HCT116 (cell line): ENCODE measurements at regions of chr14 and their contacts with region 1.

Region 1: GRCh38 chr14:55160989-55161388 is 30.4 kb downstream of the DLGAP5 start:
- DNase-seq: peak; percentile 6
- ATAC-seq: peak; percentile 73
- H3K4me3 ChIP-seq: no peak overlapping the region
- H3K27ac ChIP-seq: no peak overlapping the region
- H3K4me1 ChIP-seq: no peaks in the 10 kb centered on the region
- H3K27me3 ChIP-seq: no peaks in the 10 kb centered on the region
- CTCF ChIP-seq: peak; percentile 27 to 72 (median 62)
- POLR2A ChIP-seq: no peak
- RAD21 ChIP-seq: peak; percentile 79

Region 2: DNA sequence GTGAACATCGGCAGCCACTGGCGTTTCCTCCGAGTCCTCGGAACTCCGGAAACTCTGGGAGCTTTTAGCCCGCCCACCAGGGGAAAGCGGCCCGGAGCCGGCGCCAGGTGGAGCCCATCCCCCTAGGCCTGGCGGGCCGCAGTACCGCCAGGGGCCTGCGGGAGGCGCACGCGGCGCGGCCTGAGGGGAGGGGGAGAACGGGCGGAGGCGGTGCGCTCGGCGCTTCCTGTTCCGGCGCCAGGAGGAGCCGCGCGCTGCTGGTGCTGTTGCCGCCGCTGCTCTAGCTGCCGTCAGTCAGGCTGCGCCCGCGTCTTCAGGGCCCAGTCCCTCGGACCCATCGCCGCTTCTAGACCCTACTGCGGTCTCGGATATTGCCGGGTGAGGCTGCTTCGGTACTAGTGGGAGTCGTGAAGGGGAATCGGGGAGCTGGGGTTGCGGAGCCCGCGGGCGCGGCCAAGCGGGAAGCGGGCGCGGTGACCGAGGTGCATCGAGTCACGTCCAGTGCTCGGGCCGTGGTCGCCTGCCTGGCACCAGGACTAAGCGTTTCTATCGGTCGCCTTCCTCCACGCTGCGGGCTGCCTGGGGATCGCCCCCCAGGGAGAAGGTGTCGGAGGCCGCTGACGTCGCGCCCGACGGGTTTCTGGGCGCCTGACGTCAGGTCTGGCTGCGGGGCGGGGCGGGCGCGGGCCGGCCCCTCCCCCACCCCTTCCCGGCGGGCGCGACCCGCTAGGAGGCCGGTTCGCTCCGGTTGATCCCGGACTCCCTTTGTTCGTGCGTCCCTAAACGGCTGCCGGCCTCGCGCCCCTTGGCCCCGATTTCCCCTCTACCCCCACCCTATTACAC is 109.3 kb before region 1 on chr14 and contains the start of gene MAPK1IP1L:
- CTCF ChIA-PET with region 1: no interaction called
- POLR2A ChIA-PET with region 1: no interaction called
- RAD21 ChIA-PET with region 1: no interaction called
- intact Hi-C with region 1: loop called (anchors 1 kb)
- DNase-seq: peak; percentile 63
- ATAC-seq: peak; percentile 89
- H3K4me3 ChIP-seq: peak within 1 kb of the TSS; percentile 66 to 97
- H3K27ac ChIP-seq: peak within 1 kb of the TSS; percentile 99
- H3K4me1 ChIP-seq: peaks cover 4 to 21% of the 10 kb centered on the region in 2 experiments; a peak in 3 of 4 replicates
- H3K27me3 ChIP-seq: no peaks in the 10 kb centered on the region
- CTCF ChIP-seq: peak; percentile 92 to 99 (median 96)
- POLR2A ChIP-seq: peak; percentile 96
- RAD21 ChIP-seq: peak; percentile 78
- total RNA-seq, gene MAPK1IP1L: 101 TPM

Region 3: DNA sequence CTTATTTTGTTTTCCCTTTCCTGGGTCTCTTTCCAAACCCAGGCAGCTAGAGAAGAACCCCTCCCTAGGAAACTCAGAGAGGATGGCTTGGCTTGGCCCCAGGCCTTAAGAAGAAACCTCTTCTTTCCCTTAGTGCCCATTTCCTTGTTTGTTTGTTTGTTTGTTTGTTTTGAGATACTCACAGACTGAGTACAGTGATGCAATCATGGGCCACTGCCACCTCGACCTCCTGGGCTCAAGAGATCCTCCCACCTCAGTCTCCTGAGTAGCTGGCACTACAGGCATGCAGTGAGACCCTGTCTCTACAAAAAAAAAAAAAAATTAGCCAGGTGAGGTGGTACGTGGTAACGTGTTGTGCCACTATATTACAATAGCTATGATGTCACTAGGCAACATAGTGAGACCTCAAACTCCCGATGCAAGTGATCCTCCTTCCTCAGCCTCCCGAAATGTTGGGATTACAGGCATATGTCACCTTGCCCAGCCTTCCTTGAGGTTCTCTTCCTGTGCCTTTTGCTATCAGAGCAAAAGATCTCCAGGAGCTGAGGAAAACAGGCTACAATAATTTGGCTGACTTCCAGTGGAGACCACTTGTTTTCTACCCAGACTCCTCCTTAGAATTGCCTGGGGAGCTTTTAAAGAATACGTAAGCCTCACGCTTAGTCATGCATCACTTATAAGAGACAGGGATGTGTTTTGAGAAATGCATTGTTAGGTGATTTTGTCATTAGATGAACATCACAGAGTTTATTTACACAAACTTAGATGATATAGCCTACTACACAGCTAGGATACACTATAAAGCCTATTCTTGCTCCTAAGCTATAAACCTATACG is 66.5 kb before region 1 on chr14:
- CTCF ChIA-PET with region 1: interaction called, 46 read pairs
- POLR2A ChIA-PET with region 1: interaction called, 3 read pairs
- RAD21 ChIA-PET with region 1: interaction called, 3 to 15 read pairs
- intact Hi-C with region 1: loop called (anchors 1 kb)
- DNase-seq: no peak
- ATAC-seq: no peak
- H3K4me3 ChIP-seq: no peak overlapping the region
- H3K27ac ChIP-seq: no peak overlapping the region
- H3K4me1 ChIP-seq: peaks cover 3 to 19% of the 10 kb centered on the region in 2 experiments; a peak in 2 of 4 replicates
- H3K27me3 ChIP-seq: no peaks in the 10 kb centered on the region
- CTCF ChIP-seq: no peak
- POLR2A ChIP-seq: no peak
- RAD21 ChIP-seq: no peak

Region 4: DNA sequence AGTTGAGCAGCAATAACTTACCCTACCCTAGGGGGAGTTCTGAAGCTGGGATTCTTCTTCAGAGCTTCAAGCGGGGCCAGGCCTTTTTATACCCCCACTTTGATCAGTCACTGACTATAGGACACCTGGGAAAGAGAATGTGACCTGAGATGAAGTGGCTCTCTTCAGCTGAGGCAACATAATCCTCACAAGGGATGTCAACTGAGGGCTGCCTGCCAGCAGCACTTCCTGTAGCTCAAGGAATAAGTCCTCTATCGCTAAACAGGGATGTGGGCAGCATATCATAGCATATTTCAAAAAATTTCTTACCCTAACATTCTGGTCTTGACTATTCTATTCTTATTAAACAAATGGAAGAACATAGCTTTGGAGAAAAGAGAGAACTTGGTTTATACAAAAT is 14.6 kb before region 1 on chr14:
- CTCF ChIA-PET with region 1: no interaction called
- POLR2A ChIA-PET with region 1: no interaction called
- RAD21 ChIA-PET with region 1: no interaction called
- intact Hi-C with region 1: no loop called
- DNase-seq: no peak
- ATAC-seq: no peak; the same call in 1 of the 2 replicates
- H3K4me3 ChIP-seq: no peak overlapping the region
- H3K27ac ChIP-seq: no peak overlapping the region
- H3K4me1 ChIP-seq: no peaks in the 10 kb centered on the region
- H3K27me3 ChIP-seq: no peaks in the 10 kb centered on the region
- CTCF ChIP-seq: no peak
- POLR2A ChIP-seq: no peak
- RAD21 ChIP-seq: no peak